HEK293 (cell line): ENCODE measurements at regions of chr6 and their contacts with region 1.

Region 1: DNA sequence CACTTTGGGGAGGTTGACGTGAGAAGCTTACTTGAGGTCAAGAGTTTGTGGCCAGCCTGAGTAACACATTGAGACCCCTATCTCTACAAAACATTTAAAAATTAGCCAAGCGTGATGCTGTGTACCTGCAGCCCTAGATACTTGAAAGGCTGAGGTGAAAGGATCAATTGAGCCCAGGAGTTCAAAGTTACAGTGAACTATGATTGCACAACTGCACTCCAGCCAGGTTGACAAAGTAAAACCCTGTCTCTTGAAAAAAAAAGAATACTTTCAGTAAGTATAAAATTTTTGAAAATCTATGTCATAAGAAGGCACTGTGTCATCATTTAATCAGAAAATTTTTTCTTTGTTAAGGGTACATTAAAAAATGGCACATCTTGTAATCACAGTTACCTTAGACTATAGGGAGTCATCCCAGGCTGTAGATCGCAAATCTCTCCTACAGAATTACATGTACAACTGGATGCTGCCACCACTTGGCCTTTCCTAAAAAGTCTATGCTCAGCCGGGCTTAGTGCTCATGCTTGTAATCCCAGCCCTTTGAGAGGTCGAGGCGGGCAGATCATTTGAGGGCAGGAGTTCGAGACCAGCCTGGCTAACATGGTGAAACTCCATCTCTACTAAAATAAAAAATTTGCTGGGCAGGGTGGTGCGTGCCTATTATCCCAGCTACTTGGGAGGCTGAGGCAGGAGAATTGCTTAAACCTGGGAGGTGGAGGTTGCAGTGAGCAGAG is 17.0 kb upstream of the MRS2 start:
- H3K4me3 ChIP-seq: no peak overlapping the region
- H3K27ac ChIP-seq: no peak overlapping the region
- H3K4me1 ChIP-seq: no peaks in the 10 kb centered on the region; the same call in 1 of the 2 replicates
- CTCF ChIP-seq: no peak

Region 2: GRCh38 chr6:24019830-24020229 is 365.9 kb before region 1 on chr6:
- CTCF ChIA-PET with region 1: no interaction called
- POLR2A ChIA-PET with region 1: no interaction called
- H3K4me3 ChIP-seq: no peak overlapping the region
- H3K27ac ChIP-seq: no peak overlapping the region
- H3K4me1 ChIP-seq: no peaks in the 10 kb centered on the region
- CTCF ChIP-seq: no peak

Region 3: GRCh38 chr6:24274441-24275083 is 111.1 kb before region 1 on chr6:
- CTCF ChIA-PET with region 1: interaction called, 15 read pairs
- POLR2A ChIA-PET with region 1: no interaction called
- H3K4me3 ChIP-seq: no peak overlapping the region
- H3K27ac ChIP-seq: no peak overlapping the region
- H3K4me1 ChIP-seq: no peaks in the 10 kb centered on the region
- CTCF ChIP-seq: no peak

Region 4: DNA sequence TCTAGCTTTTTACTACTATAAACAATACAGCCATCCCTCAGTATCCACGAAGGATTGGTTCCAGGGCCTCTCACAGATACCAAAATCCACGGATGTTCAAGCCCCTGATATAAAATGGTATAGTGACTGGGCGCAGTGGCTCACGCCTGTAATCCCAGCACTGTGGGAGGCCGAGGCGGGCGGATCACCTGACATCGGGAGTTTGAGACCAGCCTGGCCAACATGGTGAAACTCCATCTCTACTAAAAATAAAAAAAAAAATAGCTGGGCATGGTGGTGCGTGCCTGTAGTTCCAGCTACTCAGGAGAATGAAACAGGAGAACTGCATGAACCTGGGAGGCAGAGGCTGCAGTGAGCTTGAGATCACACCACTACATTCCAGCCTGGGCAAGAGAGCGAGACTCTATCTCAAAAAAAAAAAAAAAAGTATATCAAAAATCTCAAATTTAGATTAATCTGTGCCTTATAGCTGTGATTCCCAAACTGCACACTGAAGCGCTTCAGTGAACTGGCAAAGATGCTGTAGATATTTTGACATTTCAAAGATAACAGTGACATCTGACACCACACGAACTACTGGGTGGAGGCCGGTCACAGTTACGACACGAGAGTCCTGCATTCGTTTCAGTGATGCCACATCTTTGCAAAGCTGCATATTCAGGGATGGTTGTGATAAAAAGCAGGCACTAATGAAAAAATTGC is 55.3 kb after region 1 on chr6:
- CTCF ChIA-PET with region 1: no interaction called
- POLR2A ChIA-PET with region 1: no interaction called
- H3K4me3 ChIP-seq: no peak overlapping the region
- H3K27ac ChIP-seq: no peak overlapping the region
- H3K4me1 ChIP-seq: no peaks in the 10 kb centered on the region
- CTCF ChIP-seq: no peak